ENCODE measurements at regions of chr4 and their contacts with region 1.

Region 1: GRCh38 chr4:121597346-121597934 is 99.3 kb downstream of the ANXA5 start:
- DNase-seq: no peak
- ATAC-seq: no peak
- H3K4me3 ChIP-seq: no peak overlapping the region
- H3K4me3 Mint-ChIP-seq: no peak overlapping the region
- H3K27ac ChIP-seq: no peak overlapping the region
- H3K27ac Mint-ChIP-seq: no peak overlapping the region
- H3K4me1 ChIP-seq: no peaks in the 10 kb centered on the region
- H3K4me1 Mint-ChIP-seq: no peaks in the 10 kb centered on the region
- H3K27me3 ChIP-seq: peaks cover 0 to 4% of the 10 kb centered on the region in 2 experiments
- H3K27me3 Mint-ChIP-seq: peaks cover 22% of the 10 kb centered on the region
- CTCF ChIP-seq: no peak

Region 2: GRCh38 chr4:119785963-119786362 is 1811.5 kb before region 1 on chr4:
- CTCF ChIA-PET with region 1: no interaction called
- POLR2A ChIA-PET with region 1: no interaction called
- intact Hi-C with region 1: no loop called
- DNase-seq: peak in 1 of 14 experiments; percentile 1
- ATAC-seq: no peak
- H3K4me3 ChIP-seq: no peak overlapping the region
- H3K4me3 Mint-ChIP-seq: no peak overlapping the region
- H3K27ac ChIP-seq: no peak overlapping the region
- H3K27ac Mint-ChIP-seq: no peak overlapping the region
- H3K4me1 ChIP-seq: no peaks in the 10 kb centered on the region
- H3K4me1 Mint-ChIP-seq: no peaks in the 10 kb centered on the region
- H3K27me3 ChIP-seq: no peaks in the 10 kb centered on the region
- H3K27me3 Mint-ChIP-seq: peaks cover 22% of the 10 kb centered on the region
- CTCF ChIP-seq: no peak

Region 3: GRCh38 chr4:120238277-120238973 is 1359.0 kb before region 1 on chr4:
- CTCF ChIA-PET with region 1: no interaction called
- POLR2A ChIA-PET with region 1: no interaction called
- intact Hi-C with region 1: no loop called
- DNase-seq: no peak
- ATAC-seq: no peak
- H3K4me3 ChIP-seq: no peak overlapping the region
- H3K4me3 Mint-ChIP-seq: no peak overlapping the region
- H3K27ac ChIP-seq: no peak overlapping the region
- H3K27ac Mint-ChIP-seq: no peak overlapping the region
- H3K4me1 ChIP-seq: no peaks in the 10 kb centered on the region
- H3K4me1 Mint-ChIP-seq: no peaks in the 10 kb centered on the region
- H3K27me3 ChIP-seq: no peaks in the 10 kb centered on the region
- H3K27me3 Mint-ChIP-seq: peaks cover 7% of the 10 kb centered on the region
- CTCF ChIP-seq: no peak

Region 4: DNA sequence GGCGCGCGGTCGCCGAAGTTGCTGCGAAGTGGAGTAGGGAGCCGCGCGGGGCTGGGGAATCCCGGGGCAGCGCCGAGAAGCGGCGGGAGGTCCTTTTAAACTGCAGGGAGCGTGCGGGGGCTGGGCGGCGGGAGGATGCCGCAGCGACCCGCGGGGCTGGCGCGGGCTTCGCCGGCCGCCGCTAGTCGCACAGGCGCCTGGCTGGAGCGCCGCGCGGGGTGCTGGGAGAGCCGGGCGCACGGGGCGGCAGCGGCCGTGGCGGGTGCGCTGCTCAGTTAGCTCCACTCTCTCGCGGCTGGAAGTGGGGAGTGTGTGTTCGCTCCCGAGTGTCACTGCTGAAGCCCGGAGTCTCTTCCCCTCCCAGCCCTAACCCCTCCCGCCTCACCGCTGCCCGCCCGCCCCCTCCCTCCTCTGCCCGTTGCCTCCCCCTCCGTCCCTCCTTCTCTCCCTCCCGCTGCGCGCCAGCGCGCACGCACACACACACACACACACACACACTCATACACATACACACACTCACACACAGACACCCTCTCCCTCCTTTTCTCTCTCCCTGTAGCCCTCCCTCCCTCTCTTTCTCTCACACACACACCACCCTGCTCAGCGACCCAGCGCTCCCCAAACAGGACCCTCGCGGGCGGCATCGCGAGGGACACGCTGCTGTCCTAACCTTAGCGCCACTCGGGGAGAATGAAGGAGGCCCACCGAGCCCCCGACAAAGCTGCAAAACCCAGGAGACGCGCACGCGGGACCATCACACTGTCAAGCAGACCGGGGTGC is 525.0 kb before region 1 on chr4 and contains the start of gene NDNF:
- CTCF ChIA-PET with region 1: no interaction called
- POLR2A ChIA-PET with region 1: no interaction called
- intact Hi-C with region 1: loop called in 1 of 2 experiments (anchors 5 kb)
- DNase-seq: peak in 9 of 14 experiments; percentile 1 to 72 (median 31)
- ATAC-seq: peak; percentile 50
- H3K4me3 ChIP-seq: peak within 1 kb of the TSS; percentile 55
- H3K4me3 Mint-ChIP-seq: peak within 1 kb of the TSS; percentile 89
- H3K27ac ChIP-seq: no peak within 1 kb of the TSS
- H3K27ac Mint-ChIP-seq: no peak within 1 kb of the TSS
- H3K4me1 ChIP-seq: peaks cover 24% of the 10 kb centered on the region
- H3K4me1 Mint-ChIP-seq: peaks cover 34% of the 10 kb centered on the region
- H3K27me3 ChIP-seq: peaks cover 26 to 72% of the 10 kb centered on the region in 2 experiments
- H3K27me3 Mint-ChIP-seq: peaks cover 81% of the 10 kb centered on the region
- CTCF ChIP-seq: no peak
- total RNA-seq, gene NDNF: 0.25 TPM in 1 of 2 experiments, not detected in the other

Region 5: GRCh38 chr4:121168446-121169281 is 428.8 kb before region 1 on chr4:
- CTCF ChIA-PET with region 1: no interaction called
- POLR2A ChIA-PET with region 1: no interaction called
- intact Hi-C with region 1: no loop called
- DNase-seq: peak in 3 of 14 experiments; percentile 10 to 52 (median 42)
- ATAC-seq: no peak
- H3K4me3 ChIP-seq: no peak overlapping the region
- H3K4me3 Mint-ChIP-seq: no peak overlapping the region
- H3K27ac ChIP-seq: no peak overlapping the region
- H3K27ac Mint-ChIP-seq: no peak overlapping the region
- H3K4me1 ChIP-seq: peaks cover 9% of the 10 kb centered on the region
- H3K4me1 Mint-ChIP-seq: peaks cover 71% of the 10 kb centered on the region
- H3K27me3 ChIP-seq: no peaks in the 10 kb centered on the region
- H3K27me3 Mint-ChIP-seq: no peaks in the 10 kb centered on the region
- CTCF ChIP-seq: no peak

Region 6: DNA sequence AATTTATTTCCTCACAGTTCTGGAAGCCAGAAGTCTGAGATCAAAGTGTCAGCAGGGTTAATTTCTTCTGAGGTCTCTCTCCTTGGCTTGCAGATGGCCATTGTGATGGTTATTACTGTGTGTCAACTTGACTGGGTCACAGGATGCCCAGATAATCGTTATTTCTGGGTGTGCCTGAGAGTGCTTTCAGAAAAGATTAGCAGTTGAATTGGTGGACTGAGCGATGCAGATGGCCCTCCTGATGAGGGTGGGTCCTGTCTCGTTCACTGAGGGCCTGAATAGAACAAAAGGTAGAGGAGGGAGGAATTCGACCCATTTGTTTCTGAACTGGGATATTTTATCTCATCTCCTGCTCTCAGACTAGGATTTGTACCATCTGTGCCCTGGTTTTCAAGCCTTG is 151.8 kb after region 1 on chr4:
- CTCF ChIA-PET with region 1: no interaction called
- POLR2A ChIA-PET with region 1: no interaction called
- intact Hi-C with region 1: no loop called
- DNase-seq: no peak
- ATAC-seq: no peak
- H3K4me3 ChIP-seq: no peak overlapping the region
- H3K4me3 Mint-ChIP-seq: no peak overlapping the region
- H3K27ac ChIP-seq: no peak overlapping the region
- H3K27ac Mint-ChIP-seq: no peak overlapping the region
- H3K4me1 ChIP-seq: no peaks in the 10 kb centered on the region
- H3K4me1 Mint-ChIP-seq: no peaks in the 10 kb centered on the region
- H3K27me3 ChIP-seq: peaks cover 0 to 8% of the 10 kb centered on the region in 2 experiments
- H3K27me3 Mint-ChIP-seq: peaks cover 42% of the 10 kb centered on the region
- CTCF ChIP-seq: no peak